Spleen (tissue), 13 donors: ENCODE measurements at regions of chr2 and their contacts with region 1.

Region 1: DNA sequence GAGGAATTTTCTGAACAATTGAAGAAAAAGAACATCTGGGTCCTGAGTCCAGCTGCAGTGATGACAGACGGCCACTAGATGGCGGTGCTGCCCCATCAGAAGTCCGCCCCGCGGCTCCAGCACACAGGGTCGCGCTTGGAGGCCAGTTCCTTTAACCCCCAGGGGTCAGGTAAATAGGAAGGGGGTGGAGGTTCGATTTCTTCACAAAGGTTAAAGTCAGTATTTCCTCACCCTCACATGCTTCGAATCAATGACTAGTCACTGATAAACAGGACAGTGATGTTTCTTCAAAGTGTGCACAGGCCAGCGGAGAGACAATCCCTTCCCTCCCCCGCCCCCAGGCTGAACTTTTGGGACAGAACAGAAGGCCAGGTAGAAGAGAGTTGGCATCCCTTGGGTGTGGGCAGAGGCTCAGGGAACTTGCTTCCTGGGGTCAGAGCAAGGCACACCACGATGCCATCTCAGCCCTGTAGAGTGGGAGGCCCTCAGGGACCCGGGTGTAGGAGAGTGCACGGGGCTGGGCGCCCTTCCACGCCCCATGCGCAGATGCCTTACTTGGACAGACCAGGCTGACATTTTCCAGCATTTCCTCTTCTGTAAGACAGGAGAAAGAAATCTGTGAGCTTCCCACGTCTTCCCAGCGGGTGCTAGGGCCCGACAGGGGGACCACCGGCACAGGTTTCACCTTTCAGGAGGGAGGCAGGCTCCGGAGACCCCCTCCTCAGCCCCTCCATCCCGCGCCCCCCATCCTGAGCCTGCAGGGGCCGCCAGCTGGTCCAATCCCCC is 722 bp downstream of the APOB start:
- DNase-seq: peak; percentile 90
- H3K4me3 ChIP-seq: peak overlapping the region in 1 of 8 donors; percentile 8
- H3K27ac ChIP-seq: peak overlapping the region in 3 of 8 donors; percentile 39 to 50 (median 48)
- H3K4me1 ChIP-seq: peaks cover 6 to 26% (median 8%) of the 10 kb centered on the region in 6 donors
- H3K27me3 ChIP-seq: peaks cover 0 to 27% (median 3%) of the 10 kb centered on the region in 7 donors
- CTCF ChIP-seq: peak; percentile 68 to 96 (median 93)
- POLR2A ChIP-seq: no peak

Region 2: GRCh38 chr2:21118302-21118920 is 75.3 kb after region 1 on chr2:
- intact Hi-C with region 1: loop called (anchors 5 kb)
- DNase-seq: no peak
- H3K4me3 ChIP-seq: no peak overlapping the region
- H3K27ac ChIP-seq: peak overlapping the region in 4 of 8 donors; percentile 37 to 60 (median 49)
- H3K4me1 ChIP-seq: peaks cover 0 to 9% (median 0%) of the 10 kb centered on the region in 6 donors
- H3K27me3 ChIP-seq: peaks cover 0 to 5% (median 0%) of the 10 kb centered on the region in 7 donors
- CTCF ChIP-seq: peak in 10 of 11 experiments; percentile 7 to 62 (median 48)
- POLR2A ChIP-seq: no peak

Region 3: DNA sequence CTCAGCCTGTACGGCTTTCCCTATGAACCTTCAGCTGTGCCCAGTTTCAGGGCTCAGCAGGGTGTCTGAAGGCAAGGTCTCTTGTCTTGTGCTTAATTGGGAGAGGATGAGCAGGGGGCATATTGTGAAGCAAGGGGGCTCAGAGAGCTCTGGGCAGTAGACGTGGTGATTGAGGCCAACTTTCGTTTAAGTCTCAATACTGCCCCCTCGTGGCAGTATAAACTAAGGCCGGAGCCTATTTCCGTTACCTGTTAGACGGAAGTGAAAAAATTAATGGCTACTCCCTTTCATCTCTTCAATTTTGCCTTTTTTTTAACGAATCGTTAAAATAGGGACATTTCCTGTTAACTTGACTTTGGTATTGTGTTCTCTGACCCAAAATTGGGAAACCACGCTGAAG is 274.0 kb after region 1 on chr2:
- intact Hi-C with region 1: loop called (anchors 10 kb)
- DNase-seq: no peak
- H3K4me3 ChIP-seq: no peak overlapping the region
- H3K27ac ChIP-seq: no peak overlapping the region
- H3K4me1 ChIP-seq: peaks cover 0 to 6% (median 0%) of the 10 kb centered on the region in 6 donors
- H3K27me3 ChIP-seq: no peaks in the 10 kb centered on the region
- CTCF ChIP-seq: peak in 9 of 11 experiments; percentile 12 to 76 (median 59)
- POLR2A ChIP-seq: no peak